H1 (cell line): ENCODE measurements at regions of chr9 and their contacts with region 1.

Region 1: GRCh38 chr9:73067074-73067473 is 84.6 kb upstream of the ANXA1 start:
- DNase-seq: no peak
- H3K4me3 ChIP-seq: no peak overlapping the region
- H3K27ac ChIP-seq: no peak overlapping the region
- H3K4me1 ChIP-seq: no peaks in the 10 kb centered on the region
- H3K27me3 ChIP-seq: no peaks in the 10 kb centered on the region
- CTCF ChIP-seq: peak; percentile 33 to 64 (median 38)
- EP300 ChIP-seq: no peak
- POLR2A ChIP-seq: no peak
- RAD21 ChIP-seq: peak; percentile 32 to 34; a peak in 3 of 4 replicates

Region 2: DNA sequence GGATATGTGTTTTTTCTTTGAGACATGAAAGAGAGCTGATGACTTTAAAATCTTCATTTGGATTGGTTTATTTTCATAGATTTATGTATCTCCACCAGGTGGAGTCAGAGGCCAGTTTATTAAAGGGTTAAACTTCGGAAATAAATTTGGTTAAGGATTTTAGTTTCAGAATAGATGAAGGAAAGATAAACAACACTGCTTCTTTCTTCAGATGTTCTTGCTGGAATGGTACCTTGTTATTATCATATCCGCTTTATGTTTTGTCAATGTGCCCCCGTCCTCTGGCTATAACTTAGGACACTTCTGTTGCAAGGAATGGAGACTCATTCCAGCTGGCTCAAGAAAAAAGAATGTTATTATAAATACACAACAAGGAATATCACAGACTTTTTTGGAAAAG is 195.4 kb before region 1 on chr9:
- CTCF ChIA-PET with region 1: interaction called, 14 read pairs
- POLR2A ChIA-PET with region 1: no interaction called
- DNase-seq: no peak
- H3K4me3 ChIP-seq: no peak overlapping the region
- H3K27ac ChIP-seq: no peak overlapping the region
- H3K4me1 ChIP-seq: peaks cover 0 to 3% (median 1%) of the 10 kb centered on the region in 4 experiments; a peak in 3 of 7 replicates
- H3K27me3 ChIP-seq: no peaks in the 10 kb centered on the region
- CTCF ChIP-seq: peak in 2 of 3 experiments; percentile 21 to 37; a peak in 2 of 4 replicates
- EP300 ChIP-seq: no peak
- POLR2A ChIP-seq: no peak
- RAD21 ChIP-seq: peak; percentile 55 to 61

Region 3: GRCh38 chr9:73294336-73294735 is 227.3 kb after region 1 on chr9:
- CTCF ChIA-PET with region 1: no interaction called
- POLR2A ChIA-PET with region 1: no interaction called
- DNase-seq: no peak
- H3K4me3 ChIP-seq: no peak overlapping the region
- H3K27ac ChIP-seq: no peak overlapping the region
- H3K4me1 ChIP-seq: no peaks in the 10 kb centered on the region
- H3K27me3 ChIP-seq: no peaks in the 10 kb centered on the region
- CTCF ChIP-seq: no peak
- EP300 ChIP-seq: no peak
- POLR2A ChIP-seq: no peak
- RAD21 ChIP-seq: no peak

Region 4: GRCh38 chr9:73701415-73702057 is 634.5 kb after region 1 on chr9:
- CTCF ChIA-PET with region 1: no interaction called
- POLR2A ChIA-PET with region 1: no interaction called
- DNase-seq: no peak
- H3K4me3 ChIP-seq: no peak overlapping the region
- H3K27ac ChIP-seq: no peak overlapping the region
- H3K4me1 ChIP-seq: no peaks in the 10 kb centered on the region
- H3K27me3 ChIP-seq: no peaks in the 10 kb centered on the region
- CTCF ChIP-seq: no peak
- EP300 ChIP-seq: no peak
- POLR2A ChIP-seq: no peak
- RAD21 ChIP-seq: no peak